Caco-2 (cell line): ENCODE measurements at regions of chr4 and their contacts with region 1.

Region 1: DNA sequence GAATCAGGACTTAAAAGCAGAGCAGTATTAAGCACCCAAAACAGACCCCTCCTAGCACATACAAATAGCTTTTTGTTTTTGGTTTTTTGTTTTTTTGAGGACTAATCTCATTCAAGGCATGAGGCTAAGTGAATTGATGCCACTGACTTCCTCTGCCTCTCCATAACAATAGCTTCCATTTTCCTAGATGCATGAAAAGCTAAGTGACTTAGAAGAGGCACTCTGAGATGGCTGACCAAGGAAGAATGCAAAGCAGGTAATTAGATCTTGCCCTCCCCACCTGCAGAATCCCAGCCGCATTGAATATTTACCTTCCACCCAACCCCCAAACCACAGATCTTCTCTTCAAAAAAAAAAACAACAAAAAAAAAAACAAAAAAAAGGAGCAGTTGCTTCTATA is 7.4 kb upstream of the KDR start:
- DNase-seq: no peak
- H3K4me3 ChIP-seq: no peak overlapping the region
- H3K4me3 Mint-ChIP-seq: no peak overlapping the region
- H3K27ac Mint-ChIP-seq: no peak overlapping the region
- H3K4me1 ChIP-seq: no peaks in the 10 kb centered on the region
- H3K4me1 Mint-ChIP-seq: no peaks in the 10 kb centered on the region
- H3K27me3 ChIP-seq: no peaks in the 10 kb centered on the region
- H3K27me3 Mint-ChIP-seq: peaks cover 9% of the 10 kb centered on the region
- CTCF ChIP-seq: no peak

Region 2: GRCh38 chr4:55087930-55088293 is 44.9 kb before region 1 on chr4:
- CTCF ChIA-PET with region 1: no interaction called
- POLR2A ChIA-PET with region 1: no interaction called
- intact Hi-C with region 1: no loop called
- DNase-seq: no peak
- H3K4me3 ChIP-seq: no peak overlapping the region
- H3K4me3 Mint-ChIP-seq: no peak overlapping the region
- H3K27ac Mint-ChIP-seq: no peak overlapping the region
- H3K4me1 ChIP-seq: no peaks in the 10 kb centered on the region
- H3K4me1 Mint-ChIP-seq: no peaks in the 10 kb centered on the region
- H3K27me3 ChIP-seq: no peaks in the 10 kb centered on the region
- H3K27me3 Mint-ChIP-seq: peaks cover 16% of the 10 kb centered on the region
- CTCF ChIP-seq: no peak

Region 3: GRCh38 chr4:55116450-55116849 is 16.3 kb before region 1 on chr4:
- CTCF ChIA-PET with region 1: no interaction called
- POLR2A ChIA-PET with region 1: no interaction called
- intact Hi-C with region 1: loop called (anchors 2 kb)
- DNase-seq: no peak
- H3K4me3 ChIP-seq: no peak overlapping the region
- H3K4me3 Mint-ChIP-seq: no peak overlapping the region
- H3K27ac Mint-ChIP-seq: no peak overlapping the region
- H3K4me1 ChIP-seq: no peaks in the 10 kb centered on the region
- H3K4me1 Mint-ChIP-seq: no peaks in the 10 kb centered on the region
- H3K27me3 ChIP-seq: no peaks in the 10 kb centered on the region
- H3K27me3 Mint-ChIP-seq: peaks cover 8% of the 10 kb centered on the region
- CTCF ChIP-seq: no peak

Region 4: DNA sequence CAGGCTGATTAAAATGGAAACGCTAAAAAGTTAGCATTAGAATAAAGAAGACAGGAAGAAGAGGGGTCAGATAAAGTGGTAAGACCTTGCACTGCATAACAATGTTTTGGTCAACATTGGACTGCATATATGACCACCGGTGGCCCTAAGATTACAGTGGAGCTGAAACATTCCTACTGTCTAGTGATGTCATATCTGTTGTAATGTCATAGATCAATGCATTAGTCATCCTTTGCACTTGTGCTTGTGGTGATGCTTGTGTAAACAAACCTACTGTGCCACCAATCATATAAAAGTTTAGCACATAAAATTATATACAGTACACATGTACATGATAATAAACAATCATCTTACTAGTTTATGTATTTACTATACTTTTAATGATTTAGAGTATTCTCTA is 335.9 kb after region 1 on chr4:
- CTCF ChIA-PET with region 1: no interaction called
- POLR2A ChIA-PET with region 1: no interaction called
- intact Hi-C with region 1: no loop called
- DNase-seq: no peak
- H3K4me3 ChIP-seq: no peak overlapping the region
- H3K4me3 Mint-ChIP-seq: no peak overlapping the region
- H3K27ac Mint-ChIP-seq: no peak overlapping the region
- H3K4me1 ChIP-seq: no peaks in the 10 kb centered on the region
- H3K4me1 Mint-ChIP-seq: no peaks in the 10 kb centered on the region
- H3K27me3 ChIP-seq: no peaks in the 10 kb centered on the region
- H3K27me3 Mint-ChIP-seq: no peaks in the 10 kb centered on the region
- CTCF ChIP-seq: no peak

Region 5: DNA sequence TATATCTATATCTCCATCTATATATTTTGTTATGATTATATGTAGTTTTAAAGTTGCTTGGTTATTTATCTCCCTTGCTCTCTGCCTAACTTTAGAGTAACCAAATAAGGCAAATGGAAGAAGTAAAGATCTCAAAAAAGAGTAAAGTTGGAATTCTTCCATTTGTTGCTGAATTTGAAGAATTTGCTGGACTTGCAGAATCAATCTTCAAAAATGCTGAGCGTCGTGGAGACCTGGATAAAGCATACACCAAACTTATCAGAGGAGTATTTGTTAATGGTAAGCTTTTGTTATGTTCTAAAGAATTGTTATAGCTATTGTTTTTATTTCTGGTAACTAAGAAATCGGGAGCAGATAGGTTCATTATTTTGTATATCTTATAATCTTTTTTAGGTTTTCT is 763.8 kb after region 1 on chr4:
- CTCF ChIA-PET with region 1: no interaction called
- POLR2A ChIA-PET with region 1: no interaction called
- intact Hi-C with region 1: no loop called
- DNase-seq: no peak
- H3K4me3 ChIP-seq: no peak overlapping the region
- H3K4me3 Mint-ChIP-seq: no peak overlapping the region
- H3K27ac Mint-ChIP-seq: no peak overlapping the region
- H3K4me1 ChIP-seq: no peaks in the 10 kb centered on the region
- H3K4me1 Mint-ChIP-seq: no peaks in the 10 kb centered on the region
- H3K27me3 ChIP-seq: no peaks in the 10 kb centered on the region
- H3K27me3 Mint-ChIP-seq: no peaks in the 10 kb centered on the region
- CTCF ChIP-seq: no peak